ENCODE measurements at regions of chr2 and their contacts with region 1.

Region 1: DNA sequence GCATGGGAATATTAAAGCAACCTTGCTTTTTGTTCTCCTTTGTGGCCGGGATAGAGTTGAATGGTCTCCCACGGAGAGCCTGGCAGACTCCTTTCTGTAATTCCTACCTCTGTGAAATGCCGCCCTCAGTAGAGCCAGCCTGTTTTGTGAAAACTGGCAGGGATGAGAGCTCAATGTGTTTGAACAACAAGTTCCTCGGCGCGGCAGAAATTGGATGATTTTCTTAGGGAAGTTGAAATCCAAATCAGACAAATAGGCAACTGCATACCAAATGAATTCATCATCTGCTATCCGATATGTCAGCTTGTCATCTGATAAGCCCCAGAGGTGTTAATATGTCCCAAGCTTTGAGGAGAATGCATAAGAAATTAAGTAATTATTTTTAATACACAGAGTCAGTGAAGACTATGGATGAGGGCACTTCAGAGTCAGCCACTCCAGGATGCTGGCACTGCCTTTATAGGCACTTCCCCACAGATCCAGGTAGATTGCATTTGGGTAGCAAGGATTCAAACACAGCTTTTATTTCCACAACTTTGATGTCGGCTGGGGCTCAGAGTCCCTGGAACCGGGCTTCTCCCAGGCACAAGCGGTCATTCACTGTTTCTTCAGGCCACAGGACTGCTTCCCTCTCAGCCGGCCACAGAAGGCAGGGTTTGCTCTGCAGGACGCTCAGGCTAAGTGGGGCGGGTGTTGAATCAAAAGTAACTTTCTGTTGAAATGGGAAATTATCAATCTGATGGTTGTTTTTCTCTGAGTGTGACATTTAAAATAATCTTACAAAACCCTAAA is 82.8 kb upstream of the REV1 start:
- DNase-seq: no peak
- H3K4me3 ChIP-seq: no peak overlapping the region
- H3K27me3 ChIP-seq: no peaks in the 10 kb centered on the region
- CTCF ChIP-seq: no peak

Region 2: GRCh38 chr2:99559075-99559662 is 13.4 kb before region 1 on chr2:
- CTCF ChIA-PET with region 1: interaction called, 9 read pairs
- POLR2A ChIA-PET with region 1: interaction called, 15 read pairs
- DNase-seq: no peak
- H3K4me3 ChIP-seq: no peak overlapping the region
- H3K27me3 ChIP-seq: no peaks in the 10 kb centered on the region
- CTCF ChIP-seq: peak; percentile 96

Region 3: DNA sequence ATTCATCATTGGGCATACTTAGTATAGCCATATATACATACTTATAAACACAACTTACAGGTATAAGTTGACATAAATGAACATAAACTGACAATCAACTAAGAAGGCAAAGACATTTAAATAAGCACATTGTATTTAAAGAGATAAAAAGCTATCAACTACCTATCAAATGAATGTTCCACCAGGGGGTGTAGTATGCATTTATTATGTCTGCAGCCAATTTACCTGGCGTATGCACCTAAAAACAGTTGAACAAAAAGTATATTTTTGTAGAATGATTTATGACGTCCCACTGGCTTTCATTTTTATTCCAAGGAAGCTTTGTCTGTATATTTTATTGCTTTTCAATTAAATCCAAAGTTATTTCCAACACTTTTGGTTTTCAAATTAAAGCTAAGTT is 246.3 kb after region 1 on chr2:
- CTCF ChIA-PET with region 1: no interaction called
- POLR2A ChIA-PET with region 1: interaction called, 15 read pairs
- DNase-seq: no peak
- H3K4me3 ChIP-seq: no peak overlapping the region
- H3K27me3 ChIP-seq: no peaks in the 10 kb centered on the region
- CTCF ChIP-seq: no peak

Measured in BJ (cell line).